Left ventricle myocardium inferior (tissue), 1 donor: ENCODE measurements at regions of chr14 and their contacts with region 1.

Region 1: DNA sequence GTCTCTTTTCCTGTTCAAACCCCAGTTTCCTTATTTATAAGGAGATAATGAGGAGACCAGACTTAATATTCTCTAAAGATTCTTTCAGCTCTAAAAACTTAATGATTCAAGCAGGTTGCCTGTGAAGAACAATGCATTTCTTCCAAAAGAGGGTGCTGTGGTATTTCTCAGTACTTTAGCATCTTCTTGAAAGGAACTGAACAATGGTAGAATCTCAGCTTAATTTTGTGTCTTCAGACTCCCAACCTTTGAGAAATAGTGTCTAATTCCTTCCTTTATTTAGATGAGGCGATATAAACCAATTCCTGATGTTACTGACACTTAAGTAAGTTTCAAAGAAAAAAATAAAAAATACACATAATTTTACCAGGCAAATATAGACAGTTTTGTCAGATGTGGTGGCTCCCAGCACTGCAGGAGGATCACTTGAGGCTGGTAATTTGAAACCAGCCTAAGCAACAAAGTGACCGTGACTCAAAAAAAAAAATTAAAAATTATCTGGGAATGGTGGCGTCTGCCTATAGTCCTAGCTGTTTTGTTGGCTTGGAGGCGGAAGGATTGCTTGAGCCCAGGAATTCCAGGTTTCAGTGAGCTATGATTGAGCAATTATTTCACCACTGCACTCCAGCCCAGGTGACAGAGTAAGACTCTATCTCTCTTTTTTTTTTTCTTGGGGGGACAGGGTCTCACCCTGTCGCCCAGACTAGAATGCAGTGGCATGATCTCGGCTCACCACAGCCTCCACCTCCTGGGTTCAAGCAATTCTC is 76.9 kb upstream of the PSMA6 start:
- DNase-seq: no peak
- H3K4me3 ChIP-seq: no peak overlapping the region
- H3K27ac ChIP-seq: peak overlapping the region; percentile 6
- H3K4me1 ChIP-seq: no peaks in the 10 kb centered on the region
- H3K27me3 ChIP-seq: no peaks in the 10 kb centered on the region
- CTCF ChIP-seq: peak; percentile 68

Region 2: GRCh38 chr14:35140718-35141581 is 74.3 kb before region 1 on chr14:
- intact Hi-C with region 1: loop called (anchors 5 kb)
- DNase-seq: no peak
- H3K4me3 ChIP-seq: no peak overlapping the region
- H3K27ac ChIP-seq: no peak overlapping the region
- H3K4me1 ChIP-seq: no peaks in the 10 kb centered on the region
- H3K27me3 ChIP-seq: no peaks in the 10 kb centered on the region
- CTCF ChIP-seq: peak; percentile 65